Right ventricle myocardium superior (tissue), 1 donor: ENCODE measurements at regions of chr6 and their contacts with region 1.

Region 1: GRCh38 chr6:111207141-111207850 is 120.0 kb downstream of the SLC16A10 start:
- DNase-seq: no peak
- ATAC-seq: peak; percentile 25

Region 2: DNA sequence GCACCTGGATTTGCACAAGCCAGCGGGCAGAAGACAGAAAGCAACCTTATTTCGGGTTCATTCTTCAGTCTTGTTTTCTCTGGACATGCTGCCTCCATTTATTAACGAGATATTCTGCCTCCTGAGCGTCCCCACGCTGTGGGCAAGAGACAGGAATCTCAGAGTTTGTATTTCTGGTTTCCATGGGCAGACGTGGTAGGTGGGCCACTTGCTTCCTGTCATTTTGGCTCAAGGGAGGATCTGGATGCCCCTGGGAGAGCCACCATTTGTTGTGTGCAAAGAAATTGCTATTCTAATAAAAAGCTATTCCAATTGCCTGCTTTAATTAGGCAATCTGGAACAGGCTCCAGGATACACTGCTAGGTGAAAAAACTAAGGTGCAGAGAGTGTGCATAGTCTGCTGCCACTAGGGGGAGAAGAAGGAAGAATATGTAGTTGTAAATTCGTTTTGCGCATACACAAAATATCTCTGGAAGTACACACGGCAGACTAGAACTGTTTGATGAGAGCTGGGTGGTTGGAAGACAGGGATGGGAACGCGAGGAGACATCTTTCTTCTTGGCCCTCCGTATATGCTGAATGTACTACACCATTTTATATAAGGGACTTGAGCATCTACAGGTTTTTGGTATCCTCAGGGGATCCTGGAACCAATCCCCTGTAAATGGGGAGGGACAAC is 150.1 kb before region 1 on chr6:
- intact Hi-C with region 1: loop called (anchors 10 kb)
- DNase-seq: no peak
- ATAC-seq: peak; percentile 89

Region 3: DNA sequence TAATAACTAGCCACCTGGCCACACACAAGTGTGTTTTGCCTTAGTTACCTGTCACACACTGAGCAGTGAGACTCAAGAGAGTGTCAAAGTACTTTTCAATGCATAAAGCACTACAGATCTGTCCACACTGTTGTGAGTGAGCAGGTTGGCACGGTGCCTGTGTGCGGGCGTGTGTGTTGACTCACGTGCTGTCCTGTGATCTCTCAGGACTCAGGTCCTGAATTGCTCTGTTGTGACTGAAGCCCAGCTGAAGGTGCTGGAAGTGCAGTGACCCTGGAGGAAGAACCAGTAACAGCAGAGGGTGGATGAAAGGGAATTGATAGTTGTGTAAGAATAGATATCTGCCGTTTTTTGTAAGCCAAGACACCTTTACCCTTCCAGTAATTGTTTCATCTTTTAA is 101.7 kb before region 1 on chr6:
- intact Hi-C with region 1: loop called (anchors 10 kb)
- DNase-seq: peak; percentile 90
- ATAC-seq: peak; percentile 98